ENCODE measurements at regions of chr14 and their contacts with region 1.

Region 1: GRCh38 chr14:82855912-82856391 is 1322.3 kb upstream of the SEL1L start:
- DNase-seq: no peak

Region 2: DNA sequence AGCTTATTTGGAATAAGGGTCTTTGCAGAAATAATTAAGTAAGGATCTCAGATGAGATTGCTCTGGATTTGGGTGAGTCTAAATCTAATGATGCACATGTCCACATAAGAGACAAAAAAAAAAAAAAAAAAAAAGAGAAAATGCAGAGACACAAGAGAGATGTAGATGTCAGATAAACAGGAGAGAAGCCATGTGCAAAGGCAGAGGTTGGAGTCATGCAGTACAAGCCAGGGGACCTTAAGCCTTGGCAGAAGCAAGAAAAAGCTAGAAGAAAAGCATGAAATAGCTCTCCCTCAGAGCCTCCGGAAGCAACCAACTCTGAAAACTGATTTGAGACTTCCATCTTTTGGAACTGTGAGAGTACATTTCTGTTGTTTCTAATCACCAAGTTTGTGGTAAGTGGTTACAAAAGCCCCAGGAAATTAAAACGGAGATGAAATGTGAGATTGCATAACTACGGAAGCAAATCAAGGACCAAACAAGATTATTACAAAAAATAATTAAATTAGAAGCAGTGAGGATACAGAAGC is 18.3 kb before region 1 on chr14:
- intact Hi-C with region 1: no loop called
- DNase-seq: no peak

Region 3: DNA sequence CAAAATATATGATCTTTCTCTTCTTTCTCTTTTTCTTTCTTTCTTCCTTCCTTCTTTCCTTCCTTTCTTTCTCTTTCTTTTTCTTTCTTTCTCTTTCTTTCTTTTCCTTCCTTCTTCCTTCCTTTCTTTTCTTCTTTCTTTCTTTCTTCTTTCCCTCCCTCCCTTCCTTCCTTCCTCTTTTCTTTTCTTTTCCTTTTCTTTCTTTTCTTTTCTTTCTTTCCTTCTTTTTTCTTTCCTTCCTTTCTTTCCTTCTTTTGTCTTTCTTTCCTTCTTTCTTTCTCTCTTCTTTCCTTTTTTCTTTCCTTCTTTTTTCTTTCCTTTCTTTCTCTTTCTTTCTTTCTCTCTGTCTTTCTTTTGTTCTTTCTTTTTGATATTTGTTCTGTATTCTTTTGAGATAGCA is 33.7 kb after region 1 on chr14:
- intact Hi-C with region 1: no loop called
- DNase-seq: no peak

Region 4: DNA sequence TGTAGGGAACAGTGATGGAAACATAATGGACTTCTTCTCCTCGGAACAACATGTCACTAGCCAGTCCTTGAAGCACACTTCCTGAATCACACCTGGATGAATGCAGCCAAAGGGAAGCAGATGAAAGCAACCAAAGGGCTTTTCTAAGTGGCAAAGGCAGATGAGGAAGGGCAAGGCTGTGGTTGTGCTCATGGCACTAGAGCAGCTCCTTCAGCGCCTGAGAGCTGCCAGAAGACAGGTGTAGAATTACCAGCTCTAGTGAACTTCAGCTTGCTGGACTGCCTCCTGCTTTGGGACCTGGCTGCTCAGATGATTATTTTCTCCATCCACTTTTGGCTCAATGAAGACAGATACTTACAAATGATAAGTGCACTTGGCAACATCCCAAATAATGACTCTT is 49.8 kb after region 1 on chr14:
- intact Hi-C with region 1: no loop called
- DNase-seq: no peak

Region 5: GRCh38 chr14:83463500-83464098 is 607.6 kb after region 1 on chr14:
- intact Hi-C with region 1: loop called in 1 of 2 experiments (anchors 10 kb)
- DNase-seq: no peak